Keratinocyte (primary cell): ENCODE measurements at regions of chr10 and their contacts with region 1.

Region 1: DNA sequence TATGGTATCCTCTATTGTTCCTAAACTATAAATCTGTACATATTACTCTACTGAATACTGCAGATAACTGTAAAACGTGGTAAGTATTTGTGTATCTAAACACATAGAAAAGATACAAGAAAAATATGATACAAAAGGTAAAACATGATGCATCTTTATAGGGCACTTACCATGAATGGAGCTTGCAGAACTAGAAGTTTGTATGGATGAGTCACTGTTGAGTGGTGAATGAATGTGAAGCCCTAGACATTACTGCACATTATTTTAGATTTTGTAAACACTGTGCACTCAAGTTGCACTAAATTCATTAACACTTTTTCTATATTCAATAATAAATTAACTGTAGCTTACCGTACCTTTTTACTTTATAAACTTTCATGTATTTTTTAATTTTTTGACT is 357.5 kb downstream of the ZWINT start:
- DNase-seq: no peak
- H3K4me3 ChIP-seq: no peak overlapping the region
- H3K27ac ChIP-seq: no peak overlapping the region
- H3K4me1 ChIP-seq: no peaks in the 10 kb centered on the region
- H3K27me3 ChIP-seq: no peaks in the 10 kb centered on the region
- CTCF ChIP-seq: no peak

Region 2: DNA sequence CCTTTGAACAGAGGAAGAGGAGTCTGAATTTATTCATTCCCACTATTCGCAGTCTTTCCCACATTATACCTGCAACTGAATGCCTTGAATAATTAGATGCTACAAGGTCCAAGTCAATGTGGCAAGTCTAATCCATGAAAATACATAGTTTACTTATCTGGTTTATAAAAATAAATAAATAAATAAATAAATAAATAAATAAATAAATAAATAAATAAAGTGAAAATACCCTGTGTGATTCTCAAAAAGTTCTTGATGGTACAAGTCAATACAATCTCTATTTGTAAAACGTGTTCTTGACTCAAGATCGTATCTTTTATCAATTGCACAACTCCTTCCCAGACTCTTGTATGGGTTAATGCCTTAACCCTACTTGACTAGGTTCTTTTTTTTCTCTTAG is 60.2 kb before region 1 on chr10:
- dilution Hi-C with region 1: loop called (anchors 5 kb)
- DNase-seq: no peak
- H3K4me3 ChIP-seq: no peak overlapping the region
- H3K27ac ChIP-seq: no peak overlapping the region
- H3K4me1 ChIP-seq: no peaks in the 10 kb centered on the region
- H3K27me3 ChIP-seq: no peaks in the 10 kb centered on the region
- CTCF ChIP-seq: no peak